ENCODE measurements at regions of chr10 and their contacts with region 1.

Region 1: DNA sequence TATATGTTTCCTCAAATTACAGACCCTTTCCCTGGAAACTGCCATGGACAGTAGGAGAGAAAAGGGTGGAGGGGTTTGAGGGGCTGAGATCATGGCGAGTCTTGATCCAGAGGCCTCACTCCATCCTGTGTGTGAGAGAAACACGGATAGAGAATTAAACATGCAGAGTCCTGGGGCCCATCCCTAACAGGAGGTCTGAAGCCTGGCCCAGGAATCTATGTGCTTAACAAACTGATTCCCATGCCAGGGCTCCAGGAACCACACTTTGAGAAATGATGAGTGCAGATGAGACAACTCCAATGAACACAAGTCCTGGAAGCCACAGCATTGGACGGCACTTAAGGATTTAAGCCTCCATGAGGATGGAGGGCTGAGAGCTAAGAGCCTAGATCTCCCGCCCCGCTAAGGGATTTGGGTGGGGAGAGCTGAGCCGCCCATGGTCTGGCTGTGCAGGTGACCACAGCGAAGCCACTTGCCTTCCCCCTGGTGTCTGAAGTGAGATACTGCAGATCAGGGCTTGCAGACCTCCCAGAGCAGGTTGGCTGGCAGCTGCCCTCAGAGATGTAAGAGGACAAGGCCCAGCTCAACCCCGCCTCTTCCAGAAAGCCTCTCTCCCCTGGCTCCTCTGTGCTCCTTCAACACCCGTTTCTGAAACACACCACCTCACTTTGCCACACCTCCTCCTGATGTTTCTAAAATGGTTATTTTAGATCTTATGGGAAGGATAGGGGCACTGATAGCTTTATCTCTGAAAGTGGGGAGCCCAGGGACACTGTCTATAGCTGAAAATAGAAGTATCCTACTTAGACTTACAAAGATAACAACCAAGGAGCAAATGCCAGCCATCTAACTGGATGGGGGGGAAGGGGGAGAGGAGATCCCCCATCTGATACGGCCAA is 24.8 kb upstream of the EIF5AL1 start:
- DNase-seq: peak; percentile 38

Region 2: GRCh38 chr10:79347226-79347893 is 140.2 kb before region 1 on chr10 and contains the start of gene PPIF:
- in situ Hi-C with region 1: loop called (anchors 25 kb)
- DNase-seq: peak; percentile 92
- total RNA-seq, gene PPIF: 58.4 and 66.1 TPM in 2 replicates

Region 3: DNA sequence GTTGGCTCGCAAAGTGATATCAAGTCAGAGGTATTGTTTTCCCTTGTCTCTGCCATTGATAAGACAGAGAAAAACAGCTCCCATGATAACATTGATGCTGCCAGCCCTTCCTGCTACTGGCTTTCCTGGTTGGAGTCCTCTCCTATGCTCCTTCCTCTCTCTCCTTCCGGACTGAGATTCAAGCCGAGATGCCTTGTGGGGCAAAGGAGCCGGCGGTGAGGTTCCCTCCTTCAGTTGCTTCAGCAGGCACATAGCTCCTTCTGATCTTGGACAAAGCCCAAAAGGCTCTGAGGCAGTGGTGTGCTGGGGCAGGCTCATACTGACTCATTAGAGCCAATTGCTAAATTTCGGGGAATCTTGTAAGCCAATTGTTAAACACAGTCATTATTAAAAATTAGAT is 33.3 kb before region 1 on chr10:
- in situ Hi-C with region 1: no loop called
- DNase-seq: no peak

Region 4: GRCh38 chr10:79562135-79562756 is 74.7 kb after region 1 on chr10:
- in situ Hi-C with region 1: no loop called
- DNase-seq: peak; percentile 82

Measured in G401 (cell line).